Activated T-helper 1 cell treated with anti-CD3 and anti-CD28 coated beads, Interleukin-12 subunit alpha, Interleukin-12 subunit beta, Interleukin-2, Interleukin-4 antibody, amounts not matched to agents 30 ng/mL and 10 ng/mL and 1 ng/mL, durations not matched to agents 14 hours and 24 hours and 36 hours (primary cell): ENCODE measurements at regions of chr20 and their contacts with region 1.

Region 1: DNA sequence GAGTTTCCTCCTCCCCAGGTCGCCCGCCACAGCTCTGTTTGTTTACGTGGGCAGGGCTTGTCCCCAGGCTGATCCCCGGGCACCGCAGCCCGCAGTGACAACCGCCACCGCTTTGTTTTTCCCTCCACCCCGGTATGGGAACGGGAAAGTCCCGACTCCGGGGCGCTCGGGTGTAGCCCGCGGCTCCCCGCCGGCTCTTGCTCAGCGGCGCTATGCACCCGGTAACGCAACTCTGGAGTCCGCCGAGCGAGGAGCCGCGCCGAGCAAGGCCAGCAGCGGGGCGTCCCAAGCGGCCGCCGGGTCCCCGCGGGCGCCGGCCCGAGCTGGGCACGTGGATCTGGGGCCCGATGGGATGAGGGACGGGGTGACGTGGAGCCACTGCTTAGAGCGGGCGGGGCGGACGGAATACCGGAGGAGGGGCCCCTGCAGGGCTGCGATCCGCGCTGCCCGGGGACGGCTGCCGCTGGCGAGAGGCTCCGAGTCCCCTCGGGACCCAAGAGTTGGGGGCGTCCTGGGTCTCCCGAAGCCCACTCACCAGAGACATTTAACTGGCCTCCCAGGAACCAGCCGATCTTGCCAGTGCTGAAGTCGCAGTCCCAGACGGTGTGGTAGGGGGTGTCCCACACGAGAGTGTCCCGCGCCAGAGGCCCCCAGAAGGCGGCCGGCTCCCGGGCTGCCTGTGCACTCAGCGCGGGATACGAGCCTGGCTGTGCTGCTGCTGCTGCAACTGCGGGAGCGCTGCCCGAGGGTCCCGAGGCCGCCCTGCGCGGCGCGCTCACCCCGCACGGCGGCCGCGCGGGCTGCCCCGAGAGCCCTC is 497 bp downstream of the ACSS1 start:
- DNase-seq: peak; percentile 83
- H3K4me3 Mint-ChIP-seq: peak overlapping the region; percentile 78
- H3K27ac Mint-ChIP-seq: peak overlapping the region; percentile 84
- H3K4me1 Mint-ChIP-seq: peaks cover 33% of the 10 kb centered on the region
- H3K27me3 Mint-ChIP-seq: peaks cover 47% of the 10 kb centered on the region

Region 2: DNA sequence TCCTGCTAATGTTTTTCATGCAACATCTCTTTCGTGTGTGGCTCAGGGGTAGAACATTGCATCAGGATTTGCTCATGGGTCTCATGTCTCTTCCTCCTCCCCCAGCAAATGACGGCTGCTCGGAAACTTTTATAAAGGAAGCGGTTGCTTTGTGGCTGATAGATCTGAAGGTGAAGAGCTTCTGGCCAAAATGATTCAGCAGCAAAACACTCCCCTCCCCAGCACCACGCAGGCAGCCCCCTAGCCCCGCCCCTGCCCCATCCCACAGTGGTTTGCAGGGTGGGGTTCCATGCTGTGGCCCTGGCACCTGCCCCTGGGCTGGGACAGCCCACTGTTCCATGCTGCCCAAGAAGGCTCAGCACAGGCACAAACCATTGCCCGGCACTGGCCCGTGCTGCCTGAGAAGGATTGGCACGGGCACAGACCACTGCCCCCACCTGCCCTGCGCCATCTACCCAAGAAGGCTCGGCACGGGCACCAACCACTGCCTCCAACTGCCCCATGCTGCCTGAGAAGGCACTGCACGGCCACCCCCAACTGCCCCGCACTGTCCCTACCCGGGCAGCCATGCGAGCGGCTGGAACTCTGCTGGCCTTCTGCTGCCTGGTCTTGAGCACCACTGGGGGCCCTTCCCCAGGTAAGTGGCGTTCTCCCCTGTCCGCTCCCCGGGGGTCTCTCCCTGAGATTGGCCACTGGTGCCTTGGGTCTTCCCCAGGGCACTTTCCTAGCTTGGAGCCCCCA is 108.3 kb before region 1 on chr20 and contains the start of gene CST7:
- intact Hi-C with region 1: loop called (anchors 1 kb)
- DNase-seq: peak; percentile 81
- H3K4me3 Mint-ChIP-seq: peak within 1 kb of the TSS; percentile 90
- H3K27ac Mint-ChIP-seq: peak within 1 kb of the TSS; percentile 99
- H3K4me1 Mint-ChIP-seq: peaks cover 74% of the 10 kb centered on the region
- H3K27me3 Mint-ChIP-seq: no peaks in the 10 kb centered on the region
- total RNA-seq, gene CST7: 127 and 133 TPM in 2 replicates

Region 3: GRCh38 chr20:24978513-24978912 is 78.9 kb before region 1 on chr20:
- intact Hi-C with region 1: no loop called
- DNase-seq: no peak
- H3K4me3 Mint-ChIP-seq: no peak overlapping the region
- H3K27ac Mint-ChIP-seq: no peak overlapping the region
- H3K4me1 Mint-ChIP-seq: peaks cover 43% of the 10 kb centered on the region
- H3K27me3 Mint-ChIP-seq: no peaks in the 10 kb centered on the region

Region 4: GRCh38 chr20:25247956-25248785 is 190.7 kb after region 1 on chr20 and contains the start of gene PYGB:
- intact Hi-C with region 1: loop called (anchors 2 kb)
- DNase-seq: peak; percentile 69
- H3K4me3 Mint-ChIP-seq: peak within 1 kb of the TSS; percentile 92
- H3K27ac Mint-ChIP-seq: peak within 1 kb of the TSS; percentile 87
- H3K4me1 Mint-ChIP-seq: peaks cover 43% of the 10 kb centered on the region
- H3K27me3 Mint-ChIP-seq: no peaks in the 10 kb centered on the region
- total RNA-seq, gene PYGB: 36.8 and 38.5 TPM in 2 replicates

Region 5: DNA sequence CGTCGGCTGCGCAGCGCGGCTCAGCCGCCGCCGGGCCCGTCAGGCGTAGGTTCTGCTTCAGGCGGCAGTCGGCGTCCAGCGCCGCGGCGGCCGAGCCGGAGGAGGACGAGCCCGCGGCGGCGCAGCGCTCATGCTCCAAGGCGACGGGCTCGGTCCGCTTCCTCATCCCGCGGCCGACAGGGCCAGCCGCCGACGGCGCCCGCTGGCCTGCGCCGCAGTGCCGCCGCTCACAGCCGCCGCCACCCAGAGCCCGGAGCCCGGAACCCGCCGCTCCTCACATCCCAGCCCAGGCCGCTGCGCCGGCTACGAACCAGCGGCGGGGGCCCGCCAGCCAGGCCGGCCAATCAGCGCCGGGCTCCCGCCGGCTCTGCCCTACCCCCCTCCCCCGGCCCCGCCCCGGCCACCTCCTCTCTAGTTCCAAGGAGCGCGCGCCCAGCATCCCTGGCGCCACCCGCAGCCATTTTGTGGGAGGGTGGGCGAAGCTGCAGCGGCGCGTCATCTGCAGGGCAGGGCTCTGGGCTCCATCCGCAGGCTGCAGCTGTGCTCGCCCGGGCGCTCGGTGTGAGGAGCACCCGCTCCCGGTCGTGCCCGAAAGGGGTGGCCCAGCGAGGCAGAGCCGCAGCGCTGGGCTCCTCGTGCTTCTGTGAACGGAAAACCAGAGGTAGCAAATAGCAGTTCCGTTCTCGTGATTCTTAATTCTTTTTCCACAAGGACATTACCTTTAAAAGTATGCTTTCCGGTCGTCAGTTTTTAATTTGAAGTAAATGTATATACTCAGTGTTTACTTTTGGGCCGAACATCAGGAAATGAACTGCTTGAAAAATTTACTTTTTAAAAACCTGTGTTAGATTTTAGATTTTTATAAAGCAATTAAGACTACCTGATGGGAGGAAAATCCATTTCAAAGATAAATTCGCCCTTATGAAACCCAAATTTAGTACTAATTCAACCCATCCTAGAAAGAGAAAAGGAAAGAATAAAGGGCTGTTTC is 333.4 kb after region 1 on chr20 and contains the start of gene ABHD12:
- intact Hi-C with region 1: loop called (anchors 2 kb)
- DNase-seq: peak; percentile 93
- H3K4me3 Mint-ChIP-seq: peak within 1 kb of the TSS; percentile 90
- H3K27ac Mint-ChIP-seq: peak within 1 kb of the TSS; percentile 88
- H3K4me1 Mint-ChIP-seq: peaks cover 18% of the 10 kb centered on the region
- H3K27me3 Mint-ChIP-seq: peaks cover 6% of the 10 kb centered on the region
- total RNA-seq, gene ABHD12: 37.0 and 37.6 TPM in 2 replicates

Region 6: GRCh38 chr20:25623736-25624499 is 566.5 kb after region 1 on chr20 and contains the start of gene NANP:
- intact Hi-C with region 1: loop called (anchors 2 kb)
- DNase-seq: peak; percentile 85
- H3K4me3 Mint-ChIP-seq: peak within 1 kb of the TSS; percentile 91
- H3K27ac Mint-ChIP-seq: peak within 1 kb of the TSS; percentile 98
- H3K4me1 Mint-ChIP-seq: peaks cover 39% of the 10 kb centered on the region
- H3K27me3 Mint-ChIP-seq: peaks cover 4% of the 10 kb centered on the region
- total RNA-seq, gene NANP: 9.1 and 9.8 TPM in 2 replicates